Spleen (tissue), 13 donors: ENCODE measurements at regions of chr3 and their contacts with region 1.

Region 1: DNA sequence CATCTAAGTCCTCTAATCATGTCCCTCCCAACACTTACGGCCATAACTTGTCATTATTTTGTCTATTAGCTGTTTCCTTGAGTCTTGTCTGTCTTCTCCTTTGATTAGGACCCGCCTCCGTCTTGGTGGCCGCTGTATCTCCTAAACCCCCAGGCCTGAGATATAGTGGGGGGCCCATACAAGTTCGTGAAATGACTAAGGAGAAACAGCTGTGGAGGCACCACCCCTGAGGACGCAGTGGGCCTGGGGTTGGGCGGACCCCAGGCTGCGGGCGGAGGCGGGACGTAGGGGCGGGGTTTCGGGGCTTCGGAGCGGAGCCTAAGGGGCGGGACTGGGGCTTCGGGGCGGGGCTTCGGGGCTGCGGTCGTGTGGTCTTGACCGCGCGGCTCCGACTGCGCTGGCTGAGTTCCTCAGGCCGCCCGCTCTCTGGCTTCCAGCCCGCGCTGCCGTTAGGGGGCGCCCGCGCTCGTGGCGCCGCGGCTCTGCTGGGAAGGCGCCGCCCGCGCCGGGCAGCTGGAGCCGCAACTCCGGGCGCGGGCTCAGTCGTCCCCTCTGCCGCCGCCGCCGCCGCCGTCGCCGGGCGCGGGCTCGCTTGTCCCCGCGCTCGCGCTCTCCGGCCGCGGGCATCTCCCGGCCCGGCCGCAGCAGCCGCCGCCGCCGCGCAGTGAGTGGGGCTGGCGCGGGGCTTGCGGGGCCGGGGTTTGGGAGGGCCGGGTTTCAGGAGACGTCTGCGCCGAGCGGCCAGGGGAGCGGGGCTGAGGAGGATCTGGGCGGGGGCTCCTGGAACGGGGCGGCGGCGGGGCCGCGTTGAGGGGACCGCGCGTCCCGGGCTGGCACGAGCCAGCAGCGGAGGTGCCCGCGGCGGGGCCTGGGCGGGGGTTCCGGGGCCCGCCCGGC is at the start of gene KCTD6:
- DNase-seq: peak; percentile 99
- H3K4me3 ChIP-seq: peak within 1 kb of the TSS; percentile 62 to 92 (median 71)
- H3K27ac ChIP-seq: peak within 1 kb of the TSS; percentile 63 to 90 (median 84)
- H3K4me1 ChIP-seq: peaks cover 26 to 70% (median 55%) of the 10 kb centered on the region in 6 donors
- H3K27me3 ChIP-seq: no peaks in the 10 kb centered on the region
- CTCF ChIP-seq: peak; percentile 33 to 94 (median 83)
- POLR2A ChIP-seq: no peak
- total RNA-seq, gene KCTD6: 8.1 to 23.5 (median 15.0) TPM

Region 2: GRCh38 chr3:58419780-58420507 is 71.8 kb before region 1 on chr3:
- intact Hi-C with region 1: loop called (anchors 10 kb)
- DNase-seq: no peak
- H3K4me3 ChIP-seq: no peak overlapping the region
- H3K27ac ChIP-seq: peak overlapping the region in 6 of 8 donors; percentile 34 to 73 (median 62)
- H3K4me1 ChIP-seq: peaks cover 0 to 28% (median 20%) of the 10 kb centered on the region in 6 donors
- H3K27me3 ChIP-seq: no peaks in the 10 kb centered on the region
- CTCF ChIP-seq: peak in 5 of 11 experiments; percentile 6 to 32 (median 14)
- POLR2A ChIP-seq: no peak